ENCODE measurements at regions of chr1 and their contacts with region 1.

Region 1: GRCh38 chr1:167715157-167715999 is 6.4 kb upstream of the MPZL1 start:
- DNase-seq: peak; percentile 92
- H3K4me3 ChIP-seq: peak overlapping the region; percentile 57 to 73 (median 67)
- H3K27ac ChIP-seq: peak overlapping the region; percentile 86 to 92 (median 88)
- H3K4me1 ChIP-seq: peaks cover 0 to 20% (median 3%) of the 10 kb centered on the region in 4 donors
- H3K27me3 ChIP-seq: no peaks in the 10 kb centered on the region
- CTCF ChIP-seq: peak; percentile 76 to 91 (median 89)
- EP300 ChIP-seq: no peak
- POLR2A ChIP-seq: no peak

Region 2: GRCh38 chr1:167663002-167663772 is 52.2 kb before region 1 on chr1:
- intact Hi-C with region 1: no loop called
- DNase-seq: no peak
- H3K4me3 ChIP-seq: no peak overlapping the region
- H3K27ac ChIP-seq: peak overlapping the region in 3 of 4 donors; percentile 3 to 40 (median 5)
- H3K4me1 ChIP-seq: peaks cover 0 to 53% (median 34%) of the 10 kb centered on the region in 4 donors
- H3K27me3 ChIP-seq: no peaks in the 10 kb centered on the region
- CTCF ChIP-seq: no peak
- EP300 ChIP-seq: no peak
- POLR2A ChIP-seq: no peak

Region 3: DNA sequence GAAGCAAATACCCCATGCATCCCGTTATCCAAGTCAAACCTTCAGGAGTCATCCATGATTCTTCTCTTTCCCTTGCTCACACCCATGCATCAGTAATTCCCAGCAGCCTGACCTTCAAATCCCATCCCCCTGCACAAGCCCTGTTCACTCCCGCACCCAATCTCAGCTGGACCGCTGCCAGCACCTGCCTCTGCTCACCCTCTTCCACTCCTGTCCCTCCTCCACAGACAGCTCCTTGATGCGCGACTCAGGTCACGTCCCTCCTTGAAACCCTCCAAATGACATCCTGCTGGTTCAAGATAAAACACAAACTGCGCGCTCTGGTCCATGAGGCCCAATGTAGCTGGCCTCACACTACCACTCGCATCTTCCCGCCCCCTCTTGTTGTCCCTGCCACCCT is 37.0 kb before region 1 on chr1:
- intact Hi-C with region 1: no loop called
- DNase-seq: no peak
- H3K4me3 ChIP-seq: no peak overlapping the region
- H3K27ac ChIP-seq: no peak overlapping the region
- H3K4me1 ChIP-seq: peaks cover 0 to 21% (median 17%) of the 10 kb centered on the region in 4 donors
- H3K27me3 ChIP-seq: no peaks in the 10 kb centered on the region
- CTCF ChIP-seq: no peak
- EP300 ChIP-seq: no peak
- POLR2A ChIP-seq: no peak

Region 4: DNA sequence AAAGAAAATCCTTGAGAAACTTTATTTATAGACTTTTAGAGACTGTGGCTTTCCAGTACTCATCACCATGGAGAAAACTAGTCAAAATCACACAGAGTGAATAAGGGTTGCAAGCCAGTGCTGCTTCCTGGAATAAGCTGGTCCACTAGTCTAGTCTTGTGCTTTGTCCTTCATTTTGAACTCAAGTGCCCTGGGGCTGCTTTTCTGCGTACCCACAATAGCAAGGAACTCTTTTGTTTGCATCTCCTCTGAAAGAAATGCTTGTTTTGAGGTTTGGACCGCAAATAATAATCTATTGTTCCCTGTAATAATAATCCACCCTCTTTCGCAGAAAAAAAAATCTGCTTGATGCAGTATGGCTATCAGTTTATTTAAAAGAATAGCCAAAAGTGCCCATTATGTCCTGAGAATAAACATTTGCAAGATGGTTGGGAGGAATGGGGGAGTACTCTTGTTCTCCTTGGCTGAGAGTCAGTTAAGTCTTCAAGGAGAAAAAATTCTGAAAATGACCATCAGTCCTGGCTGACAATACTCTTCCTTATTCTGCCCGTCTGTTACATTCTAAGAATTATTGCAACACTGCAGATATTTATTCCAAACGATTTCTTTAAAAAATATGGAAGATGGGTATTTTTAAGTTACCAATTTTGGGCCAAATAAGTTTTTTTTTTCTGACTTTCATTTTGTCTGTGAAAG is 48.3 kb after region 1 on chr1:
- intact Hi-C with region 1: no loop called
- DNase-seq: no peak
- H3K4me3 ChIP-seq: no peak overlapping the region
- H3K27ac ChIP-seq: no peak overlapping the region
- H3K4me1 ChIP-seq: peaks cover 0 to 13% (median 4%) of the 10 kb centered on the region in 4 donors
- H3K27me3 ChIP-seq: no peaks in the 10 kb centered on the region
- CTCF ChIP-seq: no peak
- EP300 ChIP-seq: no peak
- POLR2A ChIP-seq: no peak

Region 5: GRCh38 chr1:167881069-167881468 is 165.7 kb after region 1 on chr1:
- intact Hi-C with region 1: no loop called
- DNase-seq: no peak
- H3K4me3 ChIP-seq: no peak overlapping the region
- H3K27ac ChIP-seq: no peak overlapping the region
- H3K4me1 ChIP-seq: no peaks in the 10 kb centered on the region
- H3K27me3 ChIP-seq: no peaks in the 10 kb centered on the region
- CTCF ChIP-seq: no peak
- EP300 ChIP-seq: no peak
- POLR2A ChIP-seq: no peak

Region 6: DNA sequence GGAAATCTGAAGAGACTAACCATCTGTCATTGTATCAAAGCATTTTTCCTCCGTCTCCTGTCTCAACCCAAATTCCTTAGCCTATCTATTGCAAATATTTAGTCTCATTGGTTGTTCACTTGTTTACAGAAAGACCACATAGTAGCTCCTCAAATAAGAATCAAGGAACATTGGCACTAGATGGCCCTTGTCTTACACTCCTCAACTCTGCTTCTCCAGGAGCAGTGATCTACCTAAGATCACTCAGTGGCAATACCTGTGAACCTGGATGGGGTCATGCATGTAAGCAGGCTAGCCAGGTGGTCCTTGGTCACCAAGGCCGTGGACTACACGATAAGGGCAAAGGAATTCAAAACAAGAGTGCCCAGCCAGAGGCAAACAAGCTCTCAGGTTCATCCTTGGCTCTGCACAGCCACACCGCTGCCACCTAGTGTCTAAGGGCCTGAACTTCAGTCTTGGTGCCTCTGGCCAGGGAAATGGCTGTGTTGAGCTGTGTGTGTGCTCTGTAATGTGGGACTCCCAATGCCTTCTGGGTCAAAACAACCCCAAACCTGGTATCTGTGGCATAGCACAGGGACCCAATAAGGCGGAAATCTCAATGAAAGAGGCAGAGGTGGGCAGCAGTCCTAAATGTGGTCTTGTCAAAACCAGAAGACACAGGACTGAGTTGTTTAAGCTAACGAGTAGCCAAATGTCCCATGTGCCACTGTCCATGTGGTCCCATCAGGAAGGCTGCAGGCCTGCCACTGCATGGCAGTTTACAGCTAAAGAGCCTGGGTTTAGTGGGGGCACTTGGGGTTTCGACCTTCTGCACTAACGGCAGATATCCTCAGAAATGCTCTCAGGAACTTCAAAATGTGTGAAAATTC is 366.9 kb after region 1 on chr1:
- intact Hi-C with region 1: loop called (anchors 10 kb)
- DNase-seq: peak; percentile 83
- H3K4me3 ChIP-seq: no peak overlapping the region
- H3K27ac ChIP-seq: peak overlapping the region in 3 of 4 donors; percentile 11 to 80 (median 42)
- H3K4me1 ChIP-seq: peaks cover 0 to 46% (median 24%) of the 10 kb centered on the region in 4 donors
- H3K27me3 ChIP-seq: no peaks in the 10 kb centered on the region
- CTCF ChIP-seq: peak; percentile 66 to 87 (median 82)
- EP300 ChIP-seq: no peak
- POLR2A ChIP-seq: no peak